ENCODE measurements at regions of chr2 and their contacts with region 1.

Region 1: DNA sequence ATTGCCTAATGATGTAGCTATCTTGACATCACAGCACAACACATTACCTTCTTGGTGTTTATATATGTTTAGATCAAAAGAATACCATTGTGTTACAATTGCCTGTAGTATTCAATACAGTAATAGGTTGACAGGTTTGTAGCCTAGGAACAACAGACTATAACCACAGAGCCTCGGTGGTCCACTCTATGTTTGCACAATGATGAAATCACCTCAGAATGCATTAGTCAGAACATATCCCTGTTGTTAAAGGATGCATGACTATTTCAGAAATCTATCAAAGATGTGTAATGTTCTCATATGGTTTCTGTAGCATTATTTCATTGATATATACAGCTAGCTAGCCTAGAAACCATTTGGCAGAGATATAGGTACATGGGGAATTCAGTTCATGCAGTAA is 8.9 kb downstream of the METTL5 start:
- DNase-seq: no peak
- H3K4me3 ChIP-seq: no peak overlapping the region
- H3K27me3 ChIP-seq: no peaks in the 10 kb centered on the region
- CTCF ChIP-seq: no peak

Region 2: DNA sequence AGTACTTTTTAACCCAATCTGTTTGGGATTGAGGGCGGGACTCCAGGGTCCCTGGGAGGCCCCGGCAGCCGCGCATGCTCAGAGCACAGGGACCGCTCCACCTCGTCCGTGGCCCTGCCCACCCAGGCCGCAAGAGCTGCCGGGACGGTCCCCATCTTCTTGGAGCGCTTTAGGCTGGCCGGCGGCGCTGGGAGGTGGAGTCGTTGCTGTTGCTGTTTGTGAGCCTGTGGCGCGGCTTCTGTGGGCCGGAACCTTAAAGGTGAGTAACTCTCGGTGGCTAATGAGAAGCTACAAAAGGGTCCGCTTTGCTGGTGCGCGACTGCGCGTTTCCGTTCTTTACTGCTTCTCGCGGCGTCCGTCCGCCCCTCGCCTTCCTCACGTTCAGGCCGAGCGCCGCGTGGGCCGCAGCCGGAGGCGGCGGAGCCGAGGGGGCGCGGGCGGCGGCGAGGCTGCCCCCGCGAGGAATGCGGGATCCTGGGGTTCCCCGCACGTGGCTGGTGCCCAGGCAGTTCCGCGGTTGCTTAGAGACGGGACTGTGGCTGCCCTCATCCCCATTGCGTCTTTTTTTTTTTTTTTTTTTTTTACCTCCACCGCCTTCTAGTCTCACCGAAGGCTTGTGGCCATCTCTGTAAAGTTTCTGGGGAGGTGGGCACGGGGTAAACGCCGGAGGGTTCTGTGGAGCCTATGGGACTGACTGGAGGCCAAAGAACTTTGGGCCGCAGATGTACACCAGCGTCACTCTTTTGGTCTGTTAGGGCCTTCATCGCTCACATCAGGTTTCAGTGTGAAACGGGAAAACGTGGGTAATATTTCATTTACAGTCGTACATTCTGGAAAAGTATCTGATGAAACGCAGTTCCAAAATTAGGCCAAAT is 16.9 kb before region 1 on chr2 and contains the start of gene SSB:
- CTCF ChIA-PET with region 1: interaction called, 3 read pairs
- POLR2A ChIA-PET with region 1: interaction called, 28 read pairs
- DNase-seq: peak; percentile 51
- H3K4me3 ChIP-seq: peak within 1 kb of the TSS; percentile 69
- H3K27me3 ChIP-seq: no peaks in the 10 kb centered on the region
- CTCF ChIP-seq: no peak
- polyA plus RNA-seq, gene SSB: 35.8 and 106 TPM in 2 replicates